Cardiac septum (tissue), 1 donor: ENCODE measurements at regions of chr12 and their contacts with region 1.

Region 1: DNA sequence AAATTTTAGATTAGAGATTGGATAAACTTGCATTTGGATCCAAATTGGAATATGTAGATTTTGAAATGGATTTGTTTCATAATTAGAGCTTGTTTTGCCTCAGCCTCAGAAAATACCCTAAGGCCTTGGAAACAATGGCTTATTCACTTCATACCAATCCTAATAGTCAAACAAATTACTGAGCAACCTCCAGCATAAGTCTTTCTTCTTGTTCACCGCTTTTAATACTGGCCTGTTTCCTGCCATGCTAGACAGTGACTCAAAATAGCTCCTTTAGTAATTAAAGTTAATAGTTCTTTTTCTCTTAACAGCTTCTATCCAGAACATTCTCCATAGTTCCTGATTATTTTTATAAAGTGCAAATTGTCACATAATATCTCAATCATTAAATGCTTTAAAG is 110.9 kb upstream of the DNM1L start:
- DNase-seq: no peak

Region 2: GRCh38 chr12:32106517-32107358 is 461.5 kb before region 1 on chr12 and contains the start of gene BICD1:
- intact Hi-C with region 1: loop called (anchors 5 kb)
- DNase-seq: peak; percentile 95
- total RNA-seq, gene BICD1: 19.8 TPM

Region 3: DNA sequence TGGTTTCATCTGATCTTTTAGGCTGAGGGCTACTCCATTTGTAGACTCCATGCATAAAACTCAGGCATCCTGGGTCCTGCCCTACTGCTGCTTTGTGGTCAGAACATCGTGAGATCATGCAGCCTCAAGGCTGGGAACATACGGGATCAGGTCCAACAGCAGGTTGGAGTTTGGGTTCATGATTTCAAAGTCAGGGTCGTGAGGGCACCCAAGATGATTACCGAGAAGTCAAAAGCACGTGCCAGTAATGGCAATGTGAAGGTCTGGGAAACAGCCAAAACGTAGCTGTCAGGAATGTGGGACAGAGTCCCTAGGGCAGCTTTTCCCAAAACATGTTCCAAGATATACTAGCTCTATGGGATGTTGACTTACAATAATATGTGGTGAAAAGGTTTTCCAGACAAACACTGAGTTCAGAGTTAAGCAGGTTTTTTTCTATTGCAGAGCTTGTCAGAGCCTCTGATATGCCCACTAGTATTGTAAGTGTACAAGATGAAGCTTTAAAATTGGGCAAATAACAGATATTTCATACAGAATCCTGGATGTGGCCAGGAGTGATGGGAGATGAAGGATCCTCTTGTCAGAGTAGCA is 19.5 kb before region 1 on chr12:
- intact Hi-C with region 1: loop called (anchors 2 kb)
- DNase-seq: no peak